CD8-positive, alpha-beta T cell (primary cell): ENCODE measurements at regions of chr19 and their contacts with region 1.

Region 1: GRCh38 chr19:48999481-49000325 is 6.0 kb downstream of the RUVBL2 start:
- DNase-seq: peak; percentile 38 to 81 (median 69)
- ATAC-seq: peak; percentile 97
- H3K4me3 ChIP-seq: no peak overlapping the region
- H3K4me3 Mint-ChIP-seq: no peak overlapping the region
- H3K27ac ChIP-seq: no peak overlapping the region
- H3K27ac Mint-ChIP-seq: no peak overlapping the region
- H3K4me1 ChIP-seq: no peaks in the 10 kb centered on the region
- H3K4me1 Mint-ChIP-seq: peaks cover 20% of the 10 kb centered on the region
- H3K27me3 ChIP-seq: no peaks in the 10 kb centered on the region
- H3K27me3 Mint-ChIP-seq: no peaks in the 10 kb centered on the region
- CTCF ChIP-seq: peak; percentile 49

Region 2: DNA sequence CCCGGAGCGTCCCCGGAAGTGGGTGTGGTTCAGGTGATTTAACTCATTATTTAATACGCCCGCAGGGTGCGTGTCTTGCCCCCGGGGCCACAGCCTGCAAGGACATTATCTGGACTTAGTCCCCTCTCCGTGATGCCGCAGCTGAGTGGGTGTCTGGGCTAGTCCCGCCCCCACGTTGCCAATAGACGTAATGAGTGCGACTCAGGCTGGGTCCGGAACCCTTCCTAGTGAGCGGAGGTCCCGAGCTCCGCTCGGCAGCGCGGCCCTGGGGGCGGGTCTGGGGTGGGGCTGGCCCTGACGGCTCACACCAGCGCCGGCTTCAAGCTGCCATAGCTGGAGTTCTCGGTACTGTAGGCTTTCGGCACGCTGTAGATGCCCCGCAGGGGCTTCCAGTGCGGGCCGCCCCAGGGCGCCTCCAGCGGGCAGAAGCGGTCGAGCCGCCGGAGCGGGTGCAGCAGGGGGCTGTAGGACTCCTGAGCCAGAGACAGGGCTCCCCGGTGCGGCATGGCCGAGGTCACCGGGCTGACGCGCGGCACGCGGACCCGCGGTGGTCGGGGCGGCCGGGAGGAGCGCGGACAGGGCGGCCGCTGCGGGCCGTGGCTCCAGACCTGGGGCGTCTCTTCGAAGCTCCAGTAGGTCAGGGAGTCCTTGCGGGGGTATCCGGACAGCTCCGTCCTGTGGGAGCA is 18.1 kb after region 1 on chr19:
- CTCF ChIA-PET with region 1: interaction called, 20 read pairs
- POLR2A ChIA-PET with region 1: no interaction called
- intact Hi-C with region 1: no loop called
- DNase-seq: peak; percentile 50 to 81 (median 72)
- ATAC-seq: peak; percentile 86
- H3K4me3 ChIP-seq: peak overlapping the region; percentile 62 to 71
- H3K4me3 Mint-ChIP-seq: peak overlapping the region; percentile 84
- H3K27ac ChIP-seq: peak overlapping the region; percentile 7 to 39
- H3K27ac Mint-ChIP-seq: no peak overlapping the region
- H3K4me1 ChIP-seq: peaks cover 20% of the 10 kb centered on the region
- H3K4me1 Mint-ChIP-seq: peaks cover 28% of the 10 kb centered on the region
- H3K27me3 ChIP-seq: peaks cover 0 to 2% of the 10 kb centered on the region in 2 experiments
- H3K27me3 Mint-ChIP-seq: no peaks in the 10 kb centered on the region
- CTCF ChIP-seq: peak; percentile 71

Region 3: DNA sequence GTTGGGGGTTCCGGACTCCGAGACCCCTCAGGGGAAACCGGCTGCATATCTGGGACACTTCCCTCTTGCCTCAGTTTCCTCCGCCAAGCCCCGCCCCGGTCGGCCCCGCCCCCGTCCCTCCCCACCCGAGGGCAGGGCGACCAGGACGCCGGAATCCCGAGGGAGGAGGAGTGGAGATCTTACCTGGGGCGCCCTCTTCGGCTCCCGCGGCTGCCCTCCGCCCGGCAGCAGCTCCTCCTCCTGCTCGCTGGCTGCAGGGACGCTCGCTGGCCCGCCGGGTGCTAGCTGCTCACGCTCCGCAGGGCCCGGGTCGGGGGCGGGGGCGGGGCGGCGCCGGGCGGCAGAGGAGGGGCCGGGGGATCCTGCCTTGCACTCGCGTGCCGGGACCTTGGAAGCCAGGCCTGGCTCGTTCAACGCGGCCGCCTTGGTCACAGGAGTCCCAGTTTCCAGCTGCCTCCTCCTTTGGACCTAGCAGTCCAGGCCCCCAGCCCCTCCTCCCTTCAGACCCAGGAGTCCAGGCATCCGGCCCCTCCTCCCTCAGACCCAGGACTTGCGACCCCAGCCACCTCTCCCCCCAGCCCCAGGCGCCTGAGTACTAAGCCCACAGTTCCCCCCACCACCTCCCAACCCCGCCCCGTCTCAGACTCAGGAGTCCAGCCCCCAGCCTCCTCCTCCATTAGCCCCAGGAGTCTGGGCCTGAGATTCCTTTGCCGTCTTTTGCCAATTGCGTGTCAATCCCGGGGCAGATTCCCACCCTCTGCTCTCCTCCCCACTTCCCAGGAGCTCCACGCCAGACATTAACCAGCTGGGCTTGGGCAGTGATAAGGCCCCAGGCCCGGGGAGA is 65.3 kb after region 1 on chr19 and contains the start of gene NTF4:
- CTCF ChIA-PET with region 1: no interaction called
- POLR2A ChIA-PET with region 1: no interaction called
- intact Hi-C with region 1: loop called in 1 of 2 experiments (anchors 5 kb)
- DNase-seq: no peak
- ATAC-seq: peak; percentile 38
- H3K4me3 ChIP-seq: no peak within 1 kb of the TSS
- H3K4me3 Mint-ChIP-seq: no peak within 1 kb of the TSS
- H3K27ac ChIP-seq: no peak within 1 kb of the TSS
- H3K27ac Mint-ChIP-seq: no peak within 1 kb of the TSS
- H3K4me1 ChIP-seq: no peaks in the 10 kb centered on the region
- H3K4me1 Mint-ChIP-seq: no peaks in the 10 kb centered on the region
- H3K27me3 ChIP-seq: peaks cover 10 to 11% of the 10 kb centered on the region in 2 experiments
- H3K27me3 Mint-ChIP-seq: peaks cover 49% of the 10 kb centered on the region
- CTCF ChIP-seq: no peak
- total RNA-seq, gene NTF4: not detected

Region 4: GRCh38 chr19:49085020-49085867 is 85.5 kb after region 1 on chr19 and contains the start of gene SNRNP70:
- CTCF ChIA-PET with region 1: no interaction called
- POLR2A ChIA-PET with region 1: no interaction called
- intact Hi-C with region 1: loop called in 1 of 2 experiments (anchors 5 kb)
- DNase-seq: peak; percentile 97 to 100 (median 99)
- ATAC-seq: peak; percentile 97
- H3K4me3 ChIP-seq: peak within 1 kb of the TSS; percentile 85 to 91
- H3K4me3 Mint-ChIP-seq: peak within 1 kb of the TSS; percentile 96
- H3K27ac ChIP-seq: peak within 1 kb of the TSS; percentile 74 to 90
- H3K27ac Mint-ChIP-seq: peak within 1 kb of the TSS; percentile 96
- H3K4me1 ChIP-seq: peaks cover 33% of the 10 kb centered on the region
- H3K4me1 Mint-ChIP-seq: peaks cover 33% of the 10 kb centered on the region
- H3K27me3 ChIP-seq: no peaks in the 10 kb centered on the region
- H3K27me3 Mint-ChIP-seq: peaks cover 4% of the 10 kb centered on the region
- CTCF ChIP-seq: no peak
- total RNA-seq, gene SNRNP70: 341 to 350 TPM

Region 5: DNA sequence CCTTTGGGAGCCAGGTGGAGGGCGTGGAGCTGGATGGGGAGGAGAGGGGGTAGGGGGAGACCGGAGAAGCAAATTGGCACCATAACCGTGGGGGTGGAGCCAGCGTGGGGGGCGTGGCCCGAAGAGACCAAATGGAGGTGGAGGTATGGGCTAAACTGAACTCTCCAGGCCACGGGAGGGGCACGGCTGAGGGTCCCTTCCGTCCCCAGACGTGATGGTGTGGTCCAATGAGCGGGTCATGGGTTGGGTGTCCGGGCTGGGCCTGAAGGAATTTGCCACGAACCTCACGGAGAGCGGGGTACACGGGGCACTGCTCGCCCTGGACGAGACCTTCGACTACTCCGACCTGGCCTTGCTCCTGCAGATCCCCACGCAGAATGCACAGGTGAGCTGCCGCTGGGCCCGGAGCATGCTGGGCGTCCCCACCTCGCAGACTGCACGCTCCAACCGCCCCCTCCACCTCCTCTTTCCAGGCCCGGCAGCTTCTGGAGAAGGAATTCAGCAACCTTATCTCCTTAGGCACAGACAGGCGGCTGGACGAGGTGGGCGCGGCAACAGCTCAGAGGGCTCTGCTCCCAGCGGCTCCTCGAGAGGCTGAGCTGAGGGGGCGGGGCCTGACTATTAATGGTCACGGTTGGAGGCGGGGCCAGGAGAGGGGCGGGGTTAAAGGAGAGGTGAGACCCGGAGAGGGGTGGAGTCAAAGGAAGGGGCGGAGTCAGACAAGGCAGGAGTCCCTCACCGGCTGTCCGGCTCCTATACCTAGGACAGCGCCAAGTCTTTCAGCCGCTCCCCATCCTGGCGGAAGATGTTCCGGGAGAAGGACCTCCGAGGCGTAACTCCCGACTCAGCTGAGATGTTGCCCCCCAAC is 149.3 kb after region 1 on chr19:
- CTCF ChIA-PET with region 1: interaction called, 6 read pairs
- POLR2A ChIA-PET with region 1: no interaction called
- intact Hi-C with region 1: loop called (anchors 2 to 5 kb)
- DNase-seq: peak; percentile 53 to 86 (median 77)
- ATAC-seq: peak; percentile 61
- H3K4me3 ChIP-seq: peak overlapping the region; percentile 60 to 64
- H3K4me3 Mint-ChIP-seq: peak overlapping the region; percentile 78
- H3K27ac ChIP-seq: no peak overlapping the region
- H3K27ac Mint-ChIP-seq: no peak overlapping the region
- H3K4me1 ChIP-seq: peaks cover 47% of the 10 kb centered on the region
- H3K4me1 Mint-ChIP-seq: peaks cover 34% of the 10 kb centered on the region
- H3K27me3 ChIP-seq: peaks cover 36 to 39% of the 10 kb centered on the region in 2 experiments
- H3K27me3 Mint-ChIP-seq: peaks cover 65% of the 10 kb centered on the region
- CTCF ChIP-seq: no peak

Region 6: GRCh38 chr19:49165111-49165750 is 165.5 kb after region 1 on chr19:
- CTCF ChIA-PET with region 1: no interaction called
- POLR2A ChIA-PET with region 1: no interaction called
- intact Hi-C with region 1: no loop called
- DNase-seq: no peak
- ATAC-seq: no peak
- H3K4me3 ChIP-seq: no peak overlapping the region
- H3K4me3 Mint-ChIP-seq: no peak overlapping the region
- H3K27ac ChIP-seq: no peak overlapping the region
- H3K27ac Mint-ChIP-seq: no peak overlapping the region
- H3K4me1 ChIP-seq: no peaks in the 10 kb centered on the region
- H3K4me1 Mint-ChIP-seq: no peaks in the 10 kb centered on the region
- H3K27me3 ChIP-seq: no peaks in the 10 kb centered on the region
- H3K27me3 Mint-ChIP-seq: peaks cover 18% of the 10 kb centered on the region
- CTCF ChIP-seq: no peak

Region 7: DNA sequence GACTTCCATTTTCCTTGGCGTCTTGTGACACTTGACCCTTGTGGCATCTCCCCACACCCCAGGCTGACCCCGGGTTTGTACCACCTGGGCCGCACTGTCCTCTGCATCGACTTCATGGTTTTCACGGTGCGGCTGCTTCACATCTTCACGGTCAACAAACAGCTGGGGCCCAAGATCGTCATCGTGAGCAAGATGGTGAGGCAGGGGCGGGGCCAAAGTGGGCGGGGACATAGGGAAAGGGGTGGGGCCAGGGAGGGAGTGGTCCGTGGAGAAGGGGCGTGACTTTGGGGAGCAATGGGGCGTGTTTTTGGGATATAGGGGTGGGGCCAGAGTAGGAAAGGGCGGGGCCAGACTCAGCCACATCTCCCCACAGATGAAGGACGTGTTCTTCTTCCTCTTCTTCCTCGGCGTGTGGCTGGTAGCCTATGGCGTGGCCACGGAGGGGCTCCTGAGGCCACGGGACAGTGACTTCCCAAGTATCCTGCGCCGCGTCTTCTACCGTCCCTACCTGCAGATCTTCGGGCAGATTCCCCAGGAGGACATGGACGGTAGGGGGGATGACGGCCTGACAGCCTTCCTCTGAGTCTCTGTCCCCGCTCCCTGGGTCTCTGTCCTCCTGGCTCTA is 200.6 kb after region 1 on chr19:
- CTCF ChIA-PET with region 1: interaction called, 6 read pairs
- POLR2A ChIA-PET with region 1: no interaction called
- intact Hi-C with region 1: loop called (anchors 5 kb)
- DNase-seq: peak in 2 of 9 experiments; percentile 28 to 32
- ATAC-seq: no peak
- H3K4me3 ChIP-seq: no peak overlapping the region
- H3K4me3 Mint-ChIP-seq: no peak overlapping the region
- H3K27ac ChIP-seq: no peak overlapping the region
- H3K27ac Mint-ChIP-seq: no peak overlapping the region
- H3K4me1 ChIP-seq: no peaks in the 10 kb centered on the region
- H3K4me1 Mint-ChIP-seq: peaks cover 2% of the 10 kb centered on the region
- H3K27me3 ChIP-seq: no peaks in the 10 kb centered on the region
- H3K27me3 Mint-ChIP-seq: peaks cover 11% of the 10 kb centered on the region
- CTCF ChIP-seq: no peak